Right ventricle myocardium inferior (tissue), 1 donor: ENCODE measurements at regions of chr19 and their contacts with region 1.

Region 1: GRCh38 chr19:308381-309205 is 17.4 kb upstream of the PLPP2 start:
- DNase-seq: no peak
- ATAC-seq: no peak

Region 2: GRCh38 chr19:343941-344624 is 35.5 kb after region 1 on chr19:
- intact Hi-C with region 1: loop called (anchors 2 kb)
- DNase-seq: no peak
- ATAC-seq: no peak